Common myeloid progenitor, CD34-positive (primary cell): ENCODE measurements at regions of chr9 and their contacts with region 1.

Region 1: GRCh38 chr9:68560071-68560844 is 19.6 kb upstream of the TMEM252 start:
- DNase-seq: peak; percentile 80 to 93 (median 91)
- H3K4me3 ChIP-seq: peak overlapping the region in 4 of 7 experiments; percentile 17 to 66 (median 29)
- H3K27ac ChIP-seq: peak overlapping the region in 1 of 2 experiments; percentile 28
- H3K4me1 ChIP-seq: peaks cover 14 to 79% (median 39%) of the 10 kb centered on the region in 4 experiments
- H3K27me3 ChIP-seq: no peaks in the 10 kb centered on the region

Region 2: GRCh38 chr9:68574150-68574549 is 13.9 kb after region 1 on chr9:
- CTCF ChIA-PET with region 1: interaction called, 30 read pairs
- POLR2A ChIA-PET with region 1: no interaction called
- DNase-seq: no peak
- H3K4me3 ChIP-seq: no peak overlapping the region
- H3K27ac ChIP-seq: no peak overlapping the region
- H3K4me1 ChIP-seq: peaks cover 0 to 4% (median 2%) of the 10 kb centered on the region in 4 experiments
- H3K27me3 ChIP-seq: no peaks in the 10 kb centered on the region